Adrenal gland (tissue), 19 donors: ENCODE measurements at regions of chrX and their contacts with region 1.

Region 1: GRCh38 chrX:48083212-48083611 is 11.8 kb upstream of the ZNF630 start:
- DNase-seq: peak; percentile 25 to 72 (median 40)
- H3K4me3 ChIP-seq: no peak overlapping the region
- H3K27ac ChIP-seq: no peak overlapping the region
- H3K4me1 ChIP-seq: no peaks in the 10 kb centered on the region
- H3K27me3 ChIP-seq: no peaks in the 10 kb centered on the region
- CTCF ChIP-seq: peak; percentile 40 to 63 (median 58)
- POLR2A ChIP-seq: no peak

Region 2: GRCh38 chrX:47523297-47523696 is 559.9 kb before region 1 on chrX:
- intact Hi-C with region 1: no loop called
- DNase-seq: peak; percentile 69 to 91 (median 83)
- H3K4me3 ChIP-seq: peak overlapping the region in 2 of 4 donors; percentile 25 to 62
- H3K27ac ChIP-seq: no peak overlapping the region
- H3K4me1 ChIP-seq: no peaks in the 10 kb centered on the region
- H3K27me3 ChIP-seq: no peaks in the 10 kb centered on the region
- CTCF ChIP-seq: peak; percentile 59 to 89 (median 72)
- POLR2A ChIP-seq: peak in 1 of 2 donors; percentile 11

Region 3: GRCh38 chrX:48493890-48494364 is 410.7 kb after region 1 on chrX:
- intact Hi-C with region 1: loop called in 1 of 2 experiments (anchors 10 kb)
- DNase-seq: peak in 6 of 7 donors; percentile 58 to 71 (median 65)
- H3K4me3 ChIP-seq: no peak overlapping the region
- H3K27ac ChIP-seq: no peak overlapping the region
- H3K4me1 ChIP-seq: no peaks in the 10 kb centered on the region
- H3K27me3 ChIP-seq: no peaks in the 10 kb centered on the region
- CTCF ChIP-seq: peak in 5 of 6 experiments; percentile 23 to 48 (median 38)
- POLR2A ChIP-seq: no peak